Endothelial cell of umbilical vein (primary cell): ENCODE measurements at regions of chr5 and their contacts with region 1.

Region 1: DNA sequence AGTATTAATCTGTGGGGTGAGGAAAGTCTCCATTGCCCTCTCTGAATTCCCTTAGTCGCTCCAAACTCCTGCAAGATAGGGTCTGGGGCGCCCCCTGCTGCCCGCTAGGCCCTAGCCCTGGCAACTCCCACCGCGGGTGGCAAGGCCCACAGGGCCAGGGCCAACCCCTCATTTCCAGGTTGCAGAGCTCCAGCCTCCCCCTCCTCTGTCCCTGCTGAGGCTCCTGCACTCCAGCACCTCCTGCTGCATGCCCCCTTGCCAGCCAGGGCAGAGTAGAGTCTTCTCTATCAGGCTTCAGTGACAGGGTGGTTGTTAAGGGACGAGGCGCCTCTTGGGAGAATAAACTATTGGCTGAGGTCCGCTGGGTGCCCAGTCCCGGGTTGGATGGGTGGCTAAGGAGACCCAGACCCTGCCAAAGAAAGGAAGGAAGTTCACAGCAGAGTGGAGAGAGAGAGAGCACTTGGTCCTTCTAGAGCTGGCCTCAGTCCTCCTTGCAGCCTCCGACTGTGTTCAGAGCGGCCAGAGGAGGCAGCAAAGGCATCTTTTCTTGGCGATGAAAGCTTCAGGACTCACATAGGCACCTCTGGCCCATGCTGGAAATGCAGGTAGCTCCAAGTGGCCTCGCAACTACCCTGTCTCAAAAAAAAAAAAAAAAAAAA is 45.6 kb downstream of the SAR1B start:
- DNase-seq: peak; percentile 75
- H3K4me3 ChIP-seq: no peak overlapping the region
- H3K27ac ChIP-seq: no peak overlapping the region
- H3K4me1 ChIP-seq: peaks cover 3% of the 10 kb centered on the region
- H3K27me3 ChIP-seq: no peaks in the 10 kb centered on the region
- CTCF ChIP-seq: peak; percentile 97
- POLR2A ChIP-seq: no peak

Region 2: GRCh38 chr5:134304311-134304710 is 282.7 kb before region 1 on chr5:
- CTCF ChIA-PET with region 1: interaction called, 40 read pairs
- POLR2A ChIA-PET with region 1: no interaction called
- dilution Hi-C with region 1: no loop called
- intact Hi-C with region 1: loop called (anchors 1 kb)
- DNase-seq: no peak
- H3K4me3 ChIP-seq: no peak overlapping the region
- H3K27ac ChIP-seq: no peak overlapping the region
- H3K4me1 ChIP-seq: no peaks in the 10 kb centered on the region
- H3K27me3 ChIP-seq: no peaks in the 10 kb centered on the region
- CTCF ChIP-seq: no peak
- POLR2A ChIP-seq: no peak

Region 3: GRCh38 chr5:134380346-134380745 is 206.6 kb before region 1 on chr5:
- CTCF ChIA-PET with region 1: interaction called, 15 read pairs
- POLR2A ChIA-PET with region 1: no interaction called
- dilution Hi-C with region 1: no loop called
- intact Hi-C with region 1: no loop called
- DNase-seq: no peak
- H3K4me3 ChIP-seq: no peak overlapping the region
- H3K27ac ChIP-seq: no peak overlapping the region
- H3K4me1 ChIP-seq: no peaks in the 10 kb centered on the region
- H3K27me3 ChIP-seq: no peaks in the 10 kb centered on the region
- CTCF ChIP-seq: no peak
- POLR2A ChIP-seq: no peak

Region 4: DNA sequence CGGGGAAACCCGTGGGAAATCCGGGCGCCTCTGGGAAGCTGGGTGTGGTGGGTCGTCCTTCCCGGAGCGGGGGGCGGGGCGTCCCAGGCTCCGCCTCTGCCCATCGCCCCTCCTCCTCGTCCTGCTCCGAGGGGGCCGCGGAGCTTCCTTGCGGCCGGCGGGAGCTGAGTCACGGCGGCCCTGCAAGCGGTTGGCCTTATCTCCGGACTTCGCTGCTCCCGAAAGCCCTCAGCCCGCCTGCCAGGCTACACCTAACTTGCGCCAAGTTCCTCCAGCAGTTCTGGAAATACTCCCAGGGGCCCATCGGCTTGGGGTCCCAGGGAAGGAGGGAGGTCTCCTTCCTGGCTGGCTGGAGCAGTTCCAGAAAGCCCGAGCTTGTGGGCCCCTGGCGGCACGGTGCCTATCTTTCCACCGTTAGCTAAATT is 121.2 kb before region 1 on chr5:
- CTCF ChIA-PET with region 1: interaction called, 14 read pairs
- POLR2A ChIA-PET with region 1: no interaction called
- dilution Hi-C with region 1: no loop called
- intact Hi-C with region 1: no loop called
- DNase-seq: peak; percentile 94
- H3K4me3 ChIP-seq: peak overlapping the region in 2 of 3 experiments; percentile 29 to 46
- H3K27ac ChIP-seq: peak overlapping the region; percentile 94
- H3K4me1 ChIP-seq: peaks cover 17% of the 10 kb centered on the region
- H3K27me3 ChIP-seq: no peaks in the 10 kb centered on the region
- CTCF ChIP-seq: no peak
- POLR2A ChIP-seq: peak; percentile 66

Region 5: GRCh38 chr5:134555890-134556311 is 31.1 kb before region 1 on chr5:
- CTCF ChIA-PET with region 1: interaction called, 112 read pairs
- POLR2A ChIA-PET with region 1: no interaction called
- dilution Hi-C with region 1: no loop called
- intact Hi-C with region 1: loop called (anchors 1 kb)
- DNase-seq: peak; percentile 91
- H3K4me3 ChIP-seq: no peak overlapping the region
- H3K27ac ChIP-seq: peak overlapping the region; percentile 88
- H3K4me1 ChIP-seq: peaks cover 56% of the 10 kb centered on the region
- H3K27me3 ChIP-seq: no peaks in the 10 kb centered on the region
- CTCF ChIP-seq: no peak
- POLR2A ChIP-seq: no peak

Region 6: DNA sequence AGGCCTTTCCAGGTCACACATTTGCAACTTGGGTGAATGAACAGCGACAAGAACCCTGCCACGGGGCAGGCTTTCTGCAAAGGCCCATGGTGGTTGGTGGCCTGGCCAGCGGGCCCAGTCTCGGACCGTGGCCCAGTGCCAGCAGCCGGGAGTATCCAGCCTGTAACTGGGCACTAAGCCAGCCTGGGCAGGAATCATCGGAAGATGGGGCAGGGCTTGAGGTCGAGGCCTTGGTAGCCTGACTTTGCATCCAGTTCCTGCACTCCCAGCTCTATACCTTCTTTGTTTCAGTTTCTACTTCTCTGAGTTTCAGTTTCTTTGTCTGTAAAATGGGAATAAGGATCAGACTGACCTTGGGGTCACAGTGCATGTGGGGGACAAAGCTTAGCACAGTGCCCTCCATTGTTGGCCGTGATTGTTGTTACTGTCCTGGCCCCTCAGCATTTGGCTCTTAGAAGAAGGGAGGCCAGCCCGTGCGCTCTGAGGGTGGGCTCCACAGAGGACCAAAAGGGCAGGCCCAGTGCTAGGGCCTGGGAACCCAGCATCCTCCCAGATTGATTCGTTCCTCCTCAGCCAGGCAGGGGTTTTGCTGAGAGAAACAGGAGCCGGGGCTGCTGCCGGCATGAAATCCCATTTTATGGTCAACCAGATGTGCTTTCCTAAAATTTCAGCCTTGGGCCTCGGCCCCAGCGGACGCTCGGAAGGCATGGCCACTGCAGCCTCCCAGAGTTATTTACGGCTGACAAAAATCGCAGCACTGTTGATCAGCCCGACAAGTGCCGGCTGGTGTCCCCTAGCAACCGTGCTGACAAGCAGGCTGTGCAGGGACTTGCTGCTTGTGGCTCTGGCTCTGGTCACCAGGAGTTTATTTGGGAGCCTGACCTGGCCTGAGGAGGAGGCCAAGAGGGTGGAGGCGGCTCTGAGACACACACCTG is 18.0 kb before region 1 on chr5:
- CTCF ChIA-PET with region 1: interaction called, 18 read pairs
- POLR2A ChIA-PET with region 1: no interaction called
- dilution Hi-C with region 1: no loop called
- intact Hi-C with region 1: no loop called
- DNase-seq: peak; percentile 83
- H3K4me3 ChIP-seq: no peak overlapping the region
- H3K27ac ChIP-seq: peak overlapping the region; percentile 61
- H3K4me1 ChIP-seq: peaks cover 36% of the 10 kb centered on the region
- H3K27me3 ChIP-seq: no peaks in the 10 kb centered on the region
- CTCF ChIP-seq: no peak
- POLR2A ChIP-seq: no peak

Region 7: GRCh38 chr5:134803821-134804220 is 216.8 kb after region 1 on chr5:
- CTCF ChIA-PET with region 1: no interaction called
- POLR2A ChIA-PET with region 1: interaction called, 12 read pairs
- dilution Hi-C with region 1: no loop called
- intact Hi-C with region 1: no loop called
- DNase-seq: no peak
- H3K4me3 ChIP-seq: no peak overlapping the region
- H3K27ac ChIP-seq: no peak overlapping the region
- H3K4me1 ChIP-seq: no peaks in the 10 kb centered on the region
- H3K27me3 ChIP-seq: no peaks in the 10 kb centered on the region
- CTCF ChIP-seq: no peak
- POLR2A ChIP-seq: no peak

Region 8: GRCh38 chr5:135135530-135136226 is 548.7 kb after region 1 on chr5:
- CTCF ChIA-PET with region 1: no interaction called
- POLR2A ChIA-PET with region 1: no interaction called
- dilution Hi-C with region 1: no loop called
- intact Hi-C with region 1: no loop called
- DNase-seq: no peak
- H3K4me3 ChIP-seq: no peak overlapping the region
- H3K27ac ChIP-seq: no peak overlapping the region
- H3K4me1 ChIP-seq: no peaks in the 10 kb centered on the region
- H3K27me3 ChIP-seq: peaks cover 0 to 6% of the 10 kb centered on the region in 2 experiments
- CTCF ChIP-seq: no peak
- POLR2A ChIP-seq: no peak